Heart left ventricle (tissue), 16 donors: ENCODE measurements at regions of chr21 and their contacts with region 1.

Region 1: DNA sequence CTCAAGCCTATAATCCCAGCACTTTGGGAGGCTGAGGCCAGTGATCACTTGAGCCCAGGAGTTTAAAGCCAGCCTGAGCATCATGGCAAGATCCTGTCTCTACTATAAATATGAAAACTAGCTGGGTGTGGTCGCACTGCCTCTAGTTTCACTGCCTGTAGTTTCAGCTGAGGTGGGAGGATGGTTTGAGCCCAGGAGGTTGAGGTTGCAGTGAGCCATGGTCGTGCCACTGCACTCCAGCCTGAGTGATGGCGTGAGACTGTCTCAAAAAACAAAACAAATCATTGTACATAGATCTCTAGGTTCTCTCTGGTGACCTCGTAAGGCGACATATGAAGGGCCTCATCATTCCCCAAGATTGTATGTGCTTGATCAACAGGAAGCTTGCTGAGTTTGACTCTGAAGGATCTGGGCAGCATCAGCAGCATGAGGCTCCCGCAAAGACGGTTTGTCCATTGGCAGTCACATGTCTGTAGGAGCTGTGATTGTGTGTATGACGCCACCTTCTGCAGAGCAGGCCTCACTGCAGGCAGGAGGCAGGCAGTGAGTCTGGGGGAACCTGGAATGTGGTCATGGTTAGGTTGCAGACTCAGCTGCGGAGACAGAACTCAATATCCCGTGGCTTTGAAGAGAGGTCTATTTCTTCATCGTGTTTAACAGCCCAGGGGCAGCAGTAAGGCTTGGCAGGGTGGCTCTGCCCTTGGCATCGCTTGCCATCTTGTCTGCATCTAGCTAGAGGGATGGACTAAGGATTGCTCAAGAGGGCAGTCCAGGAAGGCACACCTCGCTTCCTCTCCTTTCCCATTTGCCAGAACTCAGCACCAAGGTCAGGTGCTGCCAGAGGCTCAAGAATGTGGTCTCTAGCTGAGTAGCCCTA is 14.0 kb downstream of the ATP5PO start:
- DNase-seq: peak in 2 of 5 donors; percentile 23 to 36
- ATAC-seq: peak; percentile 41 to 70 (median 68)
- H3K4me3 ChIP-seq: no peak overlapping the region
- H3K27ac ChIP-seq: peak overlapping the region in 1 of 12 donors; percentile 18
- H3K4me1 ChIP-seq: peaks cover 0 to 5% (median 0%) of the 10 kb centered on the region in 12 donors
- H3K27me3 ChIP-seq: no peaks in the 10 kb centered on the region
- CTCF ChIP-seq: peak in 10 of 12 donors; percentile 20 to 59 (median 39)
- POLR2A ChIP-seq: no peak

Region 2: GRCh38 chr21:32803651-32804050 is 1098.0 kb before region 1 on chr21:
- intact Hi-C with region 1: no loop called
- DNase-seq: no peak
- ATAC-seq: no peak
- H3K4me3 ChIP-seq: no peak overlapping the region
- H3K27ac ChIP-seq: no peak overlapping the region
- H3K4me1 ChIP-seq: peaks cover 0 to 5% (median 0%) of the 10 kb centered on the region in 12 donors
- H3K27me3 ChIP-seq: no peaks in the 10 kb centered on the region
- CTCF ChIP-seq: no peak
- POLR2A ChIP-seq: no peak

Region 3: GRCh38 chr21:33980297-33980803 is 78.7 kb after region 1 on chr21:
- intact Hi-C with region 1: no loop called
- DNase-seq: no peak
- ATAC-seq: no peak
- H3K4me3 ChIP-seq: no peak overlapping the region
- H3K27ac ChIP-seq: no peak overlapping the region
- H3K4me1 ChIP-seq: peaks cover 0 to 47% (median 16%) of the 10 kb centered on the region in 12 donors
- H3K27me3 ChIP-seq: no peaks in the 10 kb centered on the region
- CTCF ChIP-seq: no peak
- POLR2A ChIP-seq: no peak

Region 4: GRCh38 chr21:34004974-34005373 is 103.3 kb after region 1 on chr21:
- intact Hi-C with region 1: no loop called
- DNase-seq: peak in 3 of 5 donors; percentile 24 to 45 (median 33)
- ATAC-seq: peak in 2 of 4 donors; percentile 38 to 45
- H3K4me3 ChIP-seq: no peak overlapping the region
- H3K27ac ChIP-seq: peak overlapping the region in 5 of 12 donors; percentile 15 to 54 (median 19)
- H3K4me1 ChIP-seq: peaks cover 0 to 12% (median 3%) of the 10 kb centered on the region in 12 donors
- H3K27me3 ChIP-seq: no peaks in the 10 kb centered on the region
- CTCF ChIP-seq: no peak
- POLR2A ChIP-seq: no peak

Region 5: DNA sequence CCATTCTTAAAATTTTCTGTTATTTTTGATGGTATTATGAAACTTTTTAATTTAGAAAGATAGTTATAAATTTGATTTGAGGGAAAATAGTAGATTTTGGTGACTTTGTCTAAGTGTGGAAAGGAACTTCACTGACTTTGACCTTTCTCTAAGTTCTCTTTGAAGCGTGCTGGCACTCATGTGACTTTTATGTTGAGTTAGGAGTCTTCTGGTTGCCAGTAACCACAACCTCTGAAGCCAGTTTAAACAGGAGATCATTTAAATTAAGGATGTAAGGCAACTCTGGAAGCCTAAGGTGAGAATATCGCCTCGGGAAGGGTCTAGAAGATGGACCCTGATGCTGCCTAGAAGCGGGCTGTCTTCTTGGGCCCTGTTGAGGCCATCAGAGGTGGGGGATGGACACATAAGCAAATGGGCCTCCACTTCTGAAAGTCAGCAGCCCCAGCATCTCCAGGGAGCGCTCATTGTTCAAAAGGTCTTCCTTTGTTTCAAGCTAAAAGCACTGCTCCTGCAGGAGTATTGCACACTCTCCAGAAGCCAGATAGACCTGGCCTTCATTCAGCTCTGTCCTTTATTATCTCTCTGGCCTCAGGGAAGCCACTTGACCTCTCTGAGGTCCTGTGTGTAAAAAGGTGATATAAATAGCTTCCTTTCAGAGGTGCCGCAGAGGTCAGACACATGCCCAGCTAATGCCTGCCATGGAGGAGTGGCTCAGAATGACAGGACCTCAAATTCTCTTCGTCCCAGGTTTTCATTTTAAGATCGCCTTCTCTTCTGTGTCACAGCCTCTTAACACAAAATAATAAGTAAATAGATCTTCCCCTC is 718.4 kb after region 1 on chr21:
- intact Hi-C with region 1: loop called in 1 of 10 experiments (anchors 10 kb)
- DNase-seq: peak in 4 of 5 donors; percentile 21 to 52 (median 43)
- ATAC-seq: peak; percentile 71 to 89 (median 87)
- H3K4me3 ChIP-seq: no peak overlapping the region
- H3K27ac ChIP-seq: peak overlapping the region in 9 of 12 donors; percentile 51 to 73 (median 65)
- H3K4me1 ChIP-seq: peaks cover 0 to 42% (median 13%) of the 10 kb centered on the region in 12 donors
- H3K27me3 ChIP-seq: no peaks in the 10 kb centered on the region
- CTCF ChIP-seq: no peak
- POLR2A ChIP-seq: no peak